Pancreas (tissue), 10 donors: ENCODE measurements at regions of chr3 and their contacts with region 1.

Region 1: GRCh38 chr3:53709860-53710674 is 136.2 kb downstream of the CHDH start:
- DNase-seq: peak; percentile 40 to 88 (median 68)
- ATAC-seq: peak; percentile 81 to 95 (median 90)
- H3K4me3 ChIP-seq: no peak overlapping the region
- H3K27ac ChIP-seq: no peak overlapping the region
- H3K4me1 ChIP-seq: peaks cover 0 to 8% (median 8%) of the 10 kb centered on the region in 3 donors
- H3K27me3 ChIP-seq: no peaks in the 10 kb centered on the region
- CTCF ChIP-seq: peak; percentile 42 to 84 (median 74)

Region 2: GRCh38 chr3:53303957-53304356 is 406.1 kb before region 1 on chr3:
- intact Hi-C with region 1: loop called in 1 of 3 experiments (anchors 10 kb)
- DNase-seq: no peak
- ATAC-seq: no peak
- H3K4me3 ChIP-seq: no peak overlapping the region
- H3K27ac ChIP-seq: no peak overlapping the region
- H3K4me1 ChIP-seq: no peaks in the 10 kb centered on the region
- H3K27me3 ChIP-seq: no peaks in the 10 kb centered on the region
- CTCF ChIP-seq: no peak

Region 3: DNA sequence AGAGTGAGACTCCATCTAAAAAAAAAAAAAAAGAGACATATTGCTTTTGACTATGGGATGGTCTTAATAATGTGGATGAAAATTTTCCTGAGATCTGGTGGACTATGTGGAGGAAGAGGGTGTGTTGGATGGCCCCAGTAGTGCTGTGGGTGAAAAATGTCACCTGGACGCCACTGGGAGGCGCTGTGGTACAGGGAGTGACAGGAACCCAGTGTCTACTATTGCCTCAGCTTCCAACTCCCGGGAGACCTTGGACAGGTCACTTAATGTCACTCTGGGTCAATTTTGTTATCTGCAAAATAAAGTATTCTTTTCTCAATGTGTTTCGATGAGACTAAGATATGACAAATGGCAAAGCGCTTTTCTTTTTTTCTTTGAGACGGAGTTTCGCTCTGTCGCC is 335.0 kb before region 1 on chr3:
- intact Hi-C with region 1: loop called in 2 of 3 experiments (anchors 5 to 10 kb)
- DNase-seq: peak; percentile 49 to 91 (median 72)
- ATAC-seq: peak; percentile 91 to 98 (median 98)
- H3K4me3 ChIP-seq: no peak overlapping the region
- H3K27ac ChIP-seq: no peak overlapping the region
- H3K4me1 ChIP-seq: no peaks in the 10 kb centered on the region
- H3K27me3 ChIP-seq: no peaks in the 10 kb centered on the region
- CTCF ChIP-seq: peak; percentile 60 to 87 (median 68)

Region 4: GRCh38 chr3:53382106-53382505 is 328.0 kb before region 1 on chr3:
- intact Hi-C with region 1: loop called in 2 of 3 experiments (anchors 5 to 10 kb)
- DNase-seq: no peak
- ATAC-seq: no peak
- H3K4me3 ChIP-seq: no peak overlapping the region
- H3K27ac ChIP-seq: no peak overlapping the region
- H3K4me1 ChIP-seq: no peaks in the 10 kb centered on the region
- H3K27me3 ChIP-seq: no peaks in the 10 kb centered on the region
- CTCF ChIP-seq: no peak

Region 5: GRCh38 chr3:53842436-53843194 is 132.5 kb after region 1 on chr3:
- intact Hi-C with region 1: no loop called
- DNase-seq: peak; percentile 80 to 95 (median 90)
- ATAC-seq: peak; percentile 58 to 75 (median 70)
- H3K4me3 ChIP-seq: no peak overlapping the region
- H3K27ac ChIP-seq: peak overlapping the region; percentile 95 to 99 (median 96)
- H3K4me1 ChIP-seq: peaks cover 32 to 40% (median 36%) of the 10 kb centered on the region in 3 donors
- H3K27me3 ChIP-seq: no peaks in the 10 kb centered on the region
- CTCF ChIP-seq: peak; percentile 35 to 57 (median 46)